ENCODE measurements at regions of chr4 and their contacts with region 1.

Region 1: DNA sequence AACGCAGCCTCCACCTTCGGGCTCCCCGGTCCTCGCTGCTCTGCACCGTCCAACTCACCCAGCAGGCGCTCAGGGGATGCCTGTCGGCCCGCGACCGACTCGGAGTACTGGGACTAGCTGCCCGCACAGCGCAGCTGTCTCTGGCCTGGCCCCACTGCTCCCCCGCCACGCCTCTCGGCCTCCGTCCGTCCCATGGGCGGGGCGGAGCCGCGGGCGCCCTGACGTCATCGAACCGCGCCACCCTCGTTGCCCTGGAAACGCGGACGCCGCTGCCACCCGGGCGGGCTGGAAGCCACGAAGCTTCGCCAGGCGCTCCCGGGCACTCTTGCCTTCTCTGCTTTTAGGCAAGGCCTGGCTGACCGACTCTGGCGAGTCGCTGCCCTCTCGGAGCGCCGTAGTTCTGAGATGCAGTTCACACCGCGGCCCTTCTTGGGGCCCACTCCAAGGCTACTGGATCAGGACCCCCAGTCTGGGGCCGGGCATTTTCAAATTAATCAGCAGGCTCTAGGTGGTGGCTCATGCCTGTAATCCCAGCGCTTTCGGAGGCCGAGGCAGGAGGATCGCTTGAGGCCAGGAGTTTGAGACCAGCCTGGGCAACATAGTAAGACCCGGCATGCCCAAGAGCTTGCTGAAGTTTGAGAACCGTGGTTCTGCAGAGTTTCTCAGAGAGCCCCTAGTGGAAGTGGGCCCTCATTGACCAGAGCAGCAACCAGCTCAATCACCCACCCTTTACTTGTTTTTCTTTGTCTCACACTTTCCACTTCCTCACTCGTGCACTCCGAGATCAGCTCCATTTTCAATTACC is 12.0 kb downstream of the ACOX3 start:
- DNase-seq: peak; percentile 93
- ATAC-seq: peak; percentile 96
- H3K4me3 Mint-ChIP-seq: peak overlapping the region; percentile 88
- H3K27ac Mint-ChIP-seq: no peak overlapping the region
- H3K4me1 Mint-ChIP-seq: peaks cover 17% of the 10 kb centered on the region
- H3K27me3 Mint-ChIP-seq: peaks cover 5% of the 10 kb centered on the region; the same call in 1 of the 2 replicates
- CTCF ChIP-seq: no peak

Region 2: DNA sequence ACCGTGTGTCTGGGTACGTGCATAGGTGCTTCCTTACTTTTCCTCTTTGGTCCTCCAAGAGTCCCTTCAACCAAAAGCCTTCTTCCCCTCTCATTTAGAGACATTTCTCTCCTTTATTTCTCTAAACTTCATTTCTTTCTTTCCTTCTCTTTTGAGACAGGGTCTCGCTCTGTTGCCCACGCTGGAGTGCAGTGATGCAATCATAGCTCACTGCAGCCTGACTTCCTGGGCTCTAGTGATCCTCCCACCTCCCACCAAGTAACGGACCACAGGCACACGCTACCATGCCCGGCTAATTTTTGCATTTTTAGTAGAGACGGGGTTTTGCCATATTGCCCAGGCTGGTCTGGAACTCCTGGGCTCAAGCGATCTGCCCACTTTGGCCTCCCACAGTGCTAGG is 30.1 kb before region 1 on chr4:
- CTCF ChIA-PET with region 1: no interaction called
- POLR2A ChIA-PET with region 1: no interaction called
- DNase-seq: no peak
- ATAC-seq: no peak
- H3K4me3 Mint-ChIP-seq: no peak overlapping the region
- H3K27ac Mint-ChIP-seq: no peak overlapping the region
- H3K4me1 Mint-ChIP-seq: peaks cover 22% of the 10 kb centered on the region
- H3K27me3 Mint-ChIP-seq: no peaks in the 10 kb centered on the region
- CTCF ChIP-seq: no peak

Region 3: DNA sequence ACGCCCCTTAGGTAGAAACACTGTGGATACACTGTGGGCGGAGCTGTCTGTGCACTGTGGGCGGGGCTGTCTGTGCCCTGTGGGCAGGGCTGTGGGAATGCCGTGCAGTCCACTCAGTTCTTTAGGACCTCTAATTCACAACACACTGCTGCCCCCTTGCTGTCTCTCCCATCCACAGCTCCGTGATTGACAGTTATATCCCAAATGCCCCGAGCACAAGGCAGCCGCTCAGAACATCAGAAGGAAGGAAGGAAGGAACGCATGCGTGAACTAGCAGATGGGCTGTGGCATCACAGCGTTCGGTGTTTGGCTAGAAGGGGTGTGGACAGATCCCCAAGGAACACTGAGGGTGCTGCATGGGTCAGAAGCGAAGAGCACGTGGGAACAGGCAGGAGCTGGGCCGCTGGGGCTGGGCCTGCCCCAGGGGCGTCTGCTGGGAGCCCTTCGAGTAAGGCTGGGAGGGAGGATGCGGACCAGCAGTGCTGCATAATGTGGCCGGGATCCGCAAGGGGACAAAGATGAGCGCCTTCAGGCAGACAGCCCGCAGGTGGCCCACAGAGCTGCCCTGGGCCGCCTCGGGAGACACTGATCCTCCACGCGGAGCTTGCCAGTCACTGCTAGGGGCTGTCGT is 17.7 kb before region 1 on chr4:
- CTCF ChIA-PET with region 1: interaction called, 14 read pairs
- POLR2A ChIA-PET with region 1: no interaction called
- DNase-seq: peak; percentile 85
- ATAC-seq: peak; percentile 92
- H3K4me3 Mint-ChIP-seq: no peak overlapping the region
- H3K27ac Mint-ChIP-seq: peak overlapping the region; percentile 95
- H3K4me1 Mint-ChIP-seq: peaks cover 9% of the 10 kb centered on the region
- H3K27me3 Mint-ChIP-seq: peaks cover 2% of the 10 kb centered on the region; the same call in 1 of the 2 replicates
- CTCF ChIP-seq: no peak

Region 4: DNA sequence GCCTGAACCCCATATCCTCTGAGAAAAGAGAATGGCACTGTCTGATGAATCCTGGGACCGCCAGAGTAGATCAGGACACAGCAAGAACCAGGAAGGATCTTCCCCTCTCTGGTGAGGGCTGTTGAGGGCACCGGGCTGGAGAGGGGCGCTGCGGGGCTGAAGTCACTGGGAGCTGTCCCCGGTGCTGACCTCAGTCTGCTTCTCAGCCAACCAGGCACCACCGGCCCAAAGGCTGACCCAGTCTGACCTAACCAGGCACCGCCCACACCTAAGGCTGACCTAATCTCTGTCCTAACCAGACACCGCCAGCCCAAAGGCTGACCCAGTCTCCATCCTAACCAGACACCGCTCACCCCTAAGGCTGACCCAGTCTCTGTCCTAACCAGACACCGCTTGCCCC is 246.9 kb after region 1 on chr4:
- CTCF ChIA-PET with region 1: no interaction called
- POLR2A ChIA-PET with region 1: no interaction called
- DNase-seq: peak; percentile 89
- ATAC-seq: peak; percentile 99
- H3K4me3 Mint-ChIP-seq: no peak overlapping the region
- H3K27ac Mint-ChIP-seq: no peak overlapping the region
- H3K4me1 Mint-ChIP-seq: no peaks in the 10 kb centered on the region
- H3K27me3 Mint-ChIP-seq: peaks cover 14% of the 10 kb centered on the region
- CTCF ChIP-seq: no peak